Motor neuron (in vitro differentiated cells): ENCODE measurements at regions of chr20 and their contacts with region 1.

Region 1: DNA sequence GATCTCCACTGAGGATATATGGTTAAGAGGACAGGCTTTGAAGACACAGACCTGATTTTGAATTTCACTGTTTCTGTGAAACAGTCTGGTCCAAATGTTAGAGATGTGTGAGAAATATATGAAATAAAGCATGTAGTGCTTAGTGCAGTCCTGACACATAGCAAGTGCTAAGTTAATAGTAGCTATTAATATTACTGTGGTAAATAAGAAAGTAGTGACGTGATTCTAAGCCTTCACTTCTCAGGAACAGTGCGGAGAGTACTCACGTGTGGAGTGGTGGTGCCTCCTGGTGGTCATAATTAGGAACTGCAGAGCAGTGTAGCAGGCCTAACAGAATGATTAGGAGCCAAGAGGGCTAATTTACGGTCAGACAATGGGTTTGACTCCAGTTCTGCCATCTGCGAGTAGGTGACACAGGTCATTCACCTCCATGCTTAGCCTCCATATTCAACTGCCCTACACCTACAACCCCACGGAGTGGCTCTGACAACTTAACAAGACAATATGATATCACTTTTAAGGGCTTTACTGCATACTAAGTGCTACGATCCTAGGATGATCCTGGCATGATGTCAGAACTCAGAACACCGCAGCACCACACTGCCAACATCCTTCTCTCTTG is 106.2 kb downstream of the JPH2 start:
- ATAC-seq: peak; percentile 87 to 97 (median 92)
- H3K4me3 ChIP-seq: no peak overlapping the region
- H3K27ac ChIP-seq: no peak overlapping the region
- H3K4me1 ChIP-seq: no peaks in the 10 kb centered on the region

Region 2: GRCh38 chr20:43448748-43449535 is 631.8 kb before region 1 on chr20:
- in situ Hi-C with region 1: loop called in 3 of 9 experiments (anchors 25 kb)
- ATAC-seq: peak; percentile 62 to 89 (median 75)
- H3K4me3 ChIP-seq: no peak overlapping the region
- H3K27ac ChIP-seq: no peak overlapping the region
- H3K4me1 ChIP-seq: peaks cover 0 to 5% of the 10 kb centered on the region in 2 donors

Region 3: GRCh38 chr20:43537921-43538877 is 542.6 kb before region 1 on chr20:
- in situ Hi-C with region 1: loop called in 4 of 9 experiments (anchors 25 kb)
- ATAC-seq: peak; percentile 46 to 92 (median 72)
- H3K4me3 ChIP-seq: no peak overlapping the region
- H3K27ac ChIP-seq: no peak overlapping the region
- H3K4me1 ChIP-seq: no peaks in the 10 kb centered on the region

Region 4: DNA sequence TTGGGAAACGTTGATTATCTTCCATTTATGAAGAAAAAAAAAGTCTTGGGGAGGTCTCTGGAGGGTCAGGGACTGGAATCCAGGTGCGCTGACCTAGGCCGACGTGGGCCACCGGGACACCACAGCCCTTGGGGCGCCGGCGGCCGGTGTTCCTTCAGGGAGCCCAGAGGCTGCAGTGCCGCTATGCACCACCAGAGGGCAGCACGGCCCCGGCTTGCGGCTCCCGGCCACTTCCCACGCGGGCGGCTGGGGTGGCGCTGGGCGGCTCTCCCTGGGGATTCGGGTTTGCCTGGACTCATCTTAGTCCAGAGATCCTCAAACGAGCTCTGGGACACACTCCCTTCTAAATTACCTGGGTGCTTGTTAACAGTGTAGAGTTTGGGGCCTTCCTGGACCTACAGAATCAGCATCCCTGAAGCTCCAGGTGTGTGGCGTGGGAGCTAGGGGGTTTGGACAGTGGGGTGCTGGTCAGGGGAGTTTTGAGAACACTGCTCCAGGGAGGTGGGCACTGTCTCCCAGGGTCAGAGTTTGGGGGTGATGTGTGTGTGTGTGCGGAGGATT is 330.9 kb before region 1 on chr20:
- in situ Hi-C with region 1: loop called (anchors 5 to 25 kb)
- ATAC-seq: peak; percentile 76 to 97 (median 92)
- H3K4me3 ChIP-seq: no peak overlapping the region
- H3K27ac ChIP-seq: no peak overlapping the region
- H3K4me1 ChIP-seq: peaks cover 0 to 5% of the 10 kb centered on the region in 2 donors